Activated CD4-positive, alpha-beta memory T cell treated with anti-CD3 and anti-CD28 coated beads, Interleukin-2, amount 10 ng/mL, durations not matched to agents 7 days and 5 days (primary cell): ENCODE measurements at regions of chr12 and their contacts with region 1.

Region 1: DNA sequence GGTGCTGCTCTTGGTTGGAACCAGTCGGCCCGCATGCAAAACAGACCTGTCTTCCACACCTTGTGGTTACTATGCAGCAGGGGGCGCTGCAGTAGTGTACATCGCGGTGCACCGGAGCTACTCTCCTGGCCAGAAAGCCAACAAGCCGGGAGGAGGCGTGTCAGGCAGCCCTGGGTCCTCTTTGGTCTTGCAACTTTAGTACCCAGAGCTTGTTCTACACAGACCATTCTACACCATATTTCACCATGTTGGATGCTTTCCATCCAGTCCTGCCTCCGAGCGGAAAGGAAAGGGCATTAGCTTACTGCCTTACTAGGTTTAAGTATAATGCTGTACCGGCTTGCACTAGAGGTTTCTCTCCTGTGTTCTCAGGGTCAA is 927 bp upstream of the TMTC2 start:
- DNase-seq: peak; percentile 94
- H3K4me3 Mint-ChIP-seq: peak overlapping the region; percentile 85
- H3K27ac Mint-ChIP-seq: peak overlapping the region; percentile 78
- H3K4me1 Mint-ChIP-seq: peaks cover 22% of the 10 kb centered on the region
- H3K27me3 Mint-ChIP-seq: peaks cover 21% of the 10 kb centered on the region

Region 2: GRCh38 chr12:82358200-82359114 is 327.3 kb before region 1 on chr12 and contains the starts of genes CCDC59 and METTL25:
- CTCF ChIA-PET with region 1: interaction called, 5 read pairs
- POLR2A ChIA-PET with region 1: interaction called, 14 read pairs
- DNase-seq: peak; percentile 97
- H3K4me3 Mint-ChIP-seq: peak within 1 kb of the TSS; percentile 100
- H3K27ac Mint-ChIP-seq: peak within 1 kb of the TSS; percentile 96
- H3K4me1 Mint-ChIP-seq: peaks cover 48% of the 10 kb centered on the region
- H3K27me3 Mint-ChIP-seq: no peaks in the 10 kb centered on the region
- total RNA-seq, gene CCDC59: 48.3 to 50.4 TPM
- total RNA-seq, gene METTL25: 7.0 to 8.9 TPM

Region 3: GRCh38 chr12:82593901-82594396 is 91.8 kb before region 1 on chr12:
- CTCF ChIA-PET with region 1: no interaction called
- POLR2A ChIA-PET with region 1: no interaction called
- DNase-seq: no peak
- H3K4me3 Mint-ChIP-seq: no peak overlapping the region
- H3K27ac Mint-ChIP-seq: no peak overlapping the region
- H3K4me1 Mint-ChIP-seq: no peaks in the 10 kb centered on the region
- H3K27me3 Mint-ChIP-seq: no peaks in the 10 kb centered on the region

Region 4: GRCh38 chr12:82650619-82651337 is 35.0 kb before region 1 on chr12:
- CTCF ChIA-PET with region 1: interaction called, 17 read pairs
- POLR2A ChIA-PET with region 1: interaction called, 10 read pairs
- DNase-seq: peak; percentile 55
- H3K4me3 Mint-ChIP-seq: no peak overlapping the region
- H3K27ac Mint-ChIP-seq: peak overlapping the region; percentile 37
- H3K4me1 Mint-ChIP-seq: peaks cover 23% of the 10 kb centered on the region
- H3K27me3 Mint-ChIP-seq: peaks cover 11% of the 10 kb centered on the region

Region 5: GRCh38 chr12:82672811-82673495 is 12.8 kb before region 1 on chr12:
- CTCF ChIA-PET with region 1: interaction called, 37 read pairs
- POLR2A ChIA-PET with region 1: interaction called, 3 read pairs
- DNase-seq: no peak
- H3K4me3 Mint-ChIP-seq: no peak overlapping the region
- H3K27ac Mint-ChIP-seq: no peak overlapping the region
- H3K4me1 Mint-ChIP-seq: no peaks in the 10 kb centered on the region
- H3K27me3 Mint-ChIP-seq: peaks cover 5% of the 10 kb centered on the region

Region 6: GRCh38 chr12:83823431-83823963 is 1137.7 kb after region 1 on chr12:
- CTCF ChIA-PET with region 1: interaction called, 14 read pairs
- POLR2A ChIA-PET with region 1: no interaction called
- DNase-seq: peak; percentile 35
- H3K4me3 Mint-ChIP-seq: no peak overlapping the region
- H3K27ac Mint-ChIP-seq: no peak overlapping the region
- H3K4me1 Mint-ChIP-seq: no peaks in the 10 kb centered on the region
- H3K27me3 Mint-ChIP-seq: no peaks in the 10 kb centered on the region